ENCODE measurements at regions of chr1 and their contacts with region 1.

Region 1: DNA sequence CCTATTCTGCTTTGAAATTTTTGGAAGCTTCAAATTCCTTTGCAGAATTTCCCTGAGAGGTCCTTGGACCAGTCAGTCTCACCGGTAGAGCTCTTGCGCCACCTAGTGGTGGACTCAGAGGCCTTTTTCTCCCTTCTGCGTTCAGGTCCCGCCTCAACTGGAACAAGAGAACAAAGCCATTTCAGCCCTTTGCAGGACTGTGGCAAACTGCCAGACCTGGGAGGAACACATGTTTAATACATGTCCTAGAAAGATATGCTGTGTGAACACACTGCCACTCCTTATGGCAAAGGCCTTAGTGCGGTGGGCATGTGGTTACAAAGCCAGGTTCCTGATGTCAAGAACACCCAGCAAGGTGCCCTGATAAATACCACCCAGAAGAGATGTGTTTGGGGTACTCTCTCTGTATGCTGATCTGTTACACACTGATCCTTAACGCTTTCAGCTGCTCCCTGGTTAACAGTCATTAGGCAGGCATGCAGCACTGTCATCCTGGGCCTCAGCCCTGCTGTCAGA is 82.2 kb upstream of the SSX2IP start:
- DNase-seq: peak; percentile 58
- H3K4me3 ChIP-seq: no peak overlapping the region
- H3K4me3 Mint-ChIP-seq: no peak overlapping the region
- H3K27ac Mint-ChIP-seq: no peak overlapping the region
- H3K4me1 ChIP-seq: no peaks in the 10 kb centered on the region
- H3K4me1 Mint-ChIP-seq: no peaks in the 10 kb centered on the region
- H3K27me3 ChIP-seq: no peaks in the 10 kb centered on the region
- H3K27me3 Mint-ChIP-seq: peaks cover 6% of the 10 kb centered on the region
- CTCF ChIP-seq: peak; percentile 66 to 80

Region 2: GRCh38 chr1:83905315-83905907 is 867.1 kb before region 1 on chr1:
- CTCF ChIA-PET with region 1: no interaction called
- POLR2A ChIA-PET with region 1: no interaction called
- intact Hi-C with region 1: loop called (anchors 10 kb)
- DNase-seq: peak in 1 of 2 experiments; percentile 10
- H3K4me3 ChIP-seq: no peak overlapping the region
- H3K4me3 Mint-ChIP-seq: no peak overlapping the region
- H3K27ac Mint-ChIP-seq: no peak overlapping the region
- H3K4me1 ChIP-seq: no peaks in the 10 kb centered on the region
- H3K4me1 Mint-ChIP-seq: no peaks in the 10 kb centered on the region
- H3K27me3 ChIP-seq: no peaks in the 10 kb centered on the region
- H3K27me3 Mint-ChIP-seq: no peaks in the 10 kb centered on the region
- CTCF ChIP-seq: peak; percentile 21 to 39

Region 3: DNA sequence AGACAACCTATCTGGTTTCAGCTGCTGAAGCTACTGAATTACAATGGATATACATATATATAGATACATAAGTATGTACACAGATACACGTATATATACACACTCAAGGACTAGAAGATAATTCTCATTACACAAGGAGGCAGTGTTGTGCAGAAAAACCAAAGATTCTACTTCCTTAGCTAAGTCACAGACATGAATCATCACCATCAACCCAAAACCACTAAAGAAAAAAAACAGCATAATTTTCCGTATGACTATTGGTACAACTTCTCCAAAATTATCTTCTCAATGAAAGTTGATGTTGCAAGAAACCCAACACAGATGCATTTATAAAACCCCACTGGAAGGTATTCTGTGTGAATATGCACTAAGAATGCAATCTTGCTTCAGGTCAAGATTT is 330.2 kb before region 1 on chr1:
- CTCF ChIA-PET with region 1: no interaction called
- POLR2A ChIA-PET with region 1: no interaction called
- intact Hi-C with region 1: loop called (anchors 5 kb)
- DNase-seq: peak in 1 of 2 experiments; percentile 1
- H3K4me3 ChIP-seq: no peak overlapping the region
- H3K4me3 Mint-ChIP-seq: no peak overlapping the region
- H3K27ac Mint-ChIP-seq: no peak overlapping the region
- H3K4me1 ChIP-seq: no peaks in the 10 kb centered on the region
- H3K4me1 Mint-ChIP-seq: no peaks in the 10 kb centered on the region
- H3K27me3 ChIP-seq: no peaks in the 10 kb centered on the region
- H3K27me3 Mint-ChIP-seq: peaks cover 5% of the 10 kb centered on the region
- CTCF ChIP-seq: peak in 1 of 2 experiments; percentile 13

Region 4: DNA sequence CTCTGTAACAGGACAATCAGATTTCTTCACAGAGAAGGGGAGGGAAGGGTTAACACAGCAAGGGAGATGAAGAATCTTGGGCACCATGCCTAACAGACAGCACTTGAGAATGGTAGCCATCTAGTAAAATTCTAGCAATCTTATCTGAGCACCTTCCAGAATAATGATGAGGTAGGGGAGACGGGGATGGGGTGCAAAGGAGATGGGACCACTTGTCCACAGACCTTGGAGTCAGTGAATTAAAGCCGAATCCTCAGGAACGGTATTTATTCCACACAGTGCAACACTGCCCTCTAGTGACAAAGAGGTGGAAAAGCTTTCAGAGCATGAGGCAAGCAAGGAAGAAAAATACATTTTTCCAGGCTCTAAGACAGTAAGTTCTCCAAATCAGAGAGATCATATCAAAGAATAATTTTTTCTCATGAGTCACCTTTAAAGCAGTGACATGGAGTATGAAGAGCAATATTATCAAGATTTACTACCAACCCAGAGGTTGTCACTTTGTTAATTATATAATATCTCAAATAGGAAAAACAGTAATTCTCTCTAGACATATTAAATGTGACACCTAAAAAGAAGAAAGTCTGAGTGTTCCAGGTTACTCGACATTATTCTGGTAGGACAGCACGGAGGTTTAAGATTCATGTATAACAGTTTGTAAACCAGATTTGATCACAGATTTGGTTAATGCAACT is 163.8 kb after region 1 on chr1:
- CTCF ChIA-PET with region 1: no interaction called
- POLR2A ChIA-PET with region 1: no interaction called
- intact Hi-C with region 1: loop called (anchors 5 kb)
- DNase-seq: peak in 1 of 2 experiments; percentile 48
- H3K4me3 ChIP-seq: no peak overlapping the region
- H3K4me3 Mint-ChIP-seq: no peak overlapping the region
- H3K27ac Mint-ChIP-seq: no peak overlapping the region
- H3K4me1 ChIP-seq: no peaks in the 10 kb centered on the region
- H3K4me1 Mint-ChIP-seq: no peaks in the 10 kb centered on the region
- H3K27me3 ChIP-seq: no peaks in the 10 kb centered on the region
- H3K27me3 Mint-ChIP-seq: peaks cover 17% of the 10 kb centered on the region
- CTCF ChIP-seq: peak; percentile 55 to 65